Right ventricle myocardium inferior (tissue), 1 donor: ENCODE measurements at regions of chr1 and their contacts with region 1.

Region 1: GRCh38 chr1:113140588-113141446 is 67.8 kb downstream of the LRIG2 start:
- DNase-seq: no peak
- ATAC-seq: peak; percentile 90

Region 2: GRCh38 chr1:113219377-113219776 is 78.6 kb after region 1 on chr1:
- intact Hi-C with region 1: no loop called
- DNase-seq: no peak
- ATAC-seq: no peak

Region 3: DNA sequence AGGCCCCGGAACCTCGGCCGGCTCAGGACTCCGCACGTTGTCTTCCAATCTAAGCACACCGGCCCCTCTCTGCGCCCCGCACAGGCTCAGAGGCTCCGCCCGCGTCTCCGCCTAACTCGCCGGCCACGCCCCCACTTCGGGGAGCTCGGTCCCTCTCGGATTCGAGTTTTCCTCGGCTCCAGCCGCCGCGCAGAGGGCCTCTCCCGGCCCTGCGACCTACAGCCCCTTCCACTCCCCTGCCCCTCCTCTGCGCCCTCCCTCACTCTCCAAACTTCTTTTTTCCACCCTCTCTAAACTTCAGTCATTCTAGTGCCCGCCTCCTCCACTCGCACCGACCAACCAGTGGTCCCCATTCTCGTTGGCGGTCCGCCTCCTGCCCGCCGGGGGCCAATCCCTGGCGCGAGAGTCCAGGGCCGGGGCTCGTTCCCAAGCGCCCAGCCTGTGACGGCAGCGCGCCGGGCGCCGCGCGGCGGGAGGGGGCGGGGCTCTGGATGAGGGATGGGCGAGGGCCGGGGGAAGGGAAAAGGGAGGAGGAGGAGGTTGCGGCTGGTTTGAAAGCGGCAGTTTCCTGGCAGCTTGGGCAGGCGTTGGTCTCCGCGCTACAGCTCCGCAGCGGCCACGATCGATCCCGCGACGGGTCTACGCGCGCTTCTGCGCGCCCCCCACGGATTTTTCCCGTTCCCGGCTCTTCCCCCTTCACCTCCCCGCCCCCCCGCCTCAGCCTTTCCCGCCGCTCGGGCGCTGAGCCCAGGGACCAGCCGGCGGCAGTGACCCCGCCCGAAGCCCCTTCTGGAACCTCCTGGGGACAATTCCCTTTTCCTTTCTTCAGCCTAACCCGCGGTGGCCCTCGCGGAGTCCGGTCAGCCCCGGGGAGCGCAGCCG is 249.4 kb after region 1 on chr1 and contains the start of gene MAGI3:
- intact Hi-C with region 1: loop called (anchors 2 kb)
- DNase-seq: peak; percentile 97
- ATAC-seq: peak; percentile 97
- total RNA-seq, gene MAGI3: 4.6 TPM

Region 4: DNA sequence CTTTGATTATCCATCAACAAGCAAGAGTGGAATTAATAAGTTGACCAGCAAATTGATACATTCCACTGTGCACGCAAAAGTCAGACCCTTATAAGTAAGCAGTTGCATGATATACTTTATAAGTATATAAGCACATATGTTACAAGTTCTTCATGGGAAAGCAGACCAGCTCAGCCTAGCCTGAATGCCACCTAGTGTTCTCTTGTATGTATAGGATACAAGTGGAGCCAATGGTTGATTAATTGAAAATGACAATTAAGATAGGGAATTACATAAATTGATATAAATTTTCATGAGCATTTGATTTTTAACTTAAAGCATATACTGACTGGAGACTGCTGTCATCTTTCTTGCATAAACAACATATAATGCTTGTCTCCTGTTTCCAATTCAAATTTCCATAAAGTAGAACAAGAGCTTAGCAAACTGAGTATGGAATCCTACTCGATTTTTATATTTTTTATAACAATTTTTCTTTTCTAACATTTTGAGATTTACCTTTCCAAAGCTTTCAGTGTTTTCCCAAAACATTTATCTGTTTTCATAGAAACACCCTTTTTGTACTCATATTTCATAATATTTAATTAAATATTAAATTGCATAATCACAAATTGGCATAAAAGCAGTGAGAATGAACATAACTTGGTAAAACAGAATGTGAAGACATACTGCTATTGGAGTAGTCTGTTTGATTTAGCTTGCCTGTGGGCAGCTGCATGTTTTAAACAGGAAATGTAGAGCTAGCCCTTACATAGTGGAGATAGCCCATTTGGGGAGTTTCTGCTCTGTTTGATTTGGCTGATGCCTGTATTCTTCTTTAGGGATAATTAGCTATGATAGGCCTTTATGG is 312.3 kb after region 1 on chr1:
- intact Hi-C with region 1: loop called (anchors 2 kb)
- DNase-seq: no peak
- ATAC-seq: peak; percentile 85